Adrenal gland (tissue), 19 donors: ENCODE measurements at regions of chr4 and their contacts with region 1.

Region 1: DNA sequence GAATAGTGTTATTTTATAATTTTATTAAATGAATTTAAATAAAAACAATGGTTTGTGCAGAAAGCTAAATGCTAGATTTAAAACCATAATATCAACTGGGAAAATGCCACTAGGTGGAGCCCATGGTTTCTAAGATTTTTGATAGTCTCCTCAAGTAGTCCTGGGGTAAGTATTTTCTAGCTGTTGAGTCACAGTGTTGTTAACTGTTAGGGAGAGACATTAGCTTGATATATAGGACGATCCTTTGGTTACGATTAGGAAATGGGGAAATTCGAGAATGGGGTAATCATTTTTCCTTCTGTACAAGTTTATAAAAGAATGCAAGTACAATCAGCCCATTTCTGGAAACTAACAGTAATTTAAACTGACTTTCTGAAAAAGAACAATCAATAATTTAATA is 378.4 kb downstream of the ANKRD50 start:
- DNase-seq: peak in 5 of 7 donors; percentile 23 to 59 (median 51)
- H3K4me3 ChIP-seq: no peak overlapping the region
- H3K27ac ChIP-seq: no peak overlapping the region
- H3K4me1 ChIP-seq: no peaks in the 10 kb centered on the region
- H3K27me3 ChIP-seq: no peaks in the 10 kb centered on the region
- CTCF ChIP-seq: peak; percentile 38 to 72 (median 53)
- POLR2A ChIP-seq: no peak

Region 2: GRCh38 chr4:125244848-125245450 is 910.8 kb after region 1 on chr4:
- intact Hi-C with region 1: loop called in 1 of 2 experiments (anchors 10 kb)
- DNase-seq: no peak
- H3K4me3 ChIP-seq: no peak overlapping the region
- H3K27ac ChIP-seq: no peak overlapping the region
- H3K4me1 ChIP-seq: no peaks in the 10 kb centered on the region
- H3K27me3 ChIP-seq: no peaks in the 10 kb centered on the region
- CTCF ChIP-seq: peak in 3 of 6 experiments; percentile 34 to 40 (median 35)
- POLR2A ChIP-seq: no peak

Region 3: GRCh38 chr4:125283707-125284279 is 949.7 kb after region 1 on chr4:
- intact Hi-C with region 1: loop called (anchors 5 to 10 kb)
- DNase-seq: no peak
- H3K4me3 ChIP-seq: no peak overlapping the region
- H3K27ac ChIP-seq: no peak overlapping the region
- H3K4me1 ChIP-seq: no peaks in the 10 kb centered on the region
- H3K27me3 ChIP-seq: no peaks in the 10 kb centered on the region
- CTCF ChIP-seq: peak in 5 of 6 experiments; percentile 39 to 67 (median 61)
- POLR2A ChIP-seq: no peak